GM12878 (cell line): ENCODE measurements at regions of chr14 and their contacts with region 1.

Region 1: GRCh38 chr14:92259613-92260357 is 63.2 kb upstream of the SLC24A4 start:
- DNase-seq: peak; percentile 95
- ATAC-seq: peak; percentile 87
- H3K4me3 ChIP-seq: peak overlapping the region; percentile 20; the same call in 1 of the 2 replicates
- H3K27ac ChIP-seq: peak overlapping the region; percentile 87
- H3K4me1 ChIP-seq: peaks cover 34% of the 10 kb centered on the region
- H3K27me3 ChIP-seq: no peaks in the 10 kb centered on the region; a peak in 1 of 4 replicates
- CTCF ChIP-seq: peak in 1 of 3 experiments; percentile 13; a peak in 1 of 6 replicates
- EP300 ChIP-seq: peak; percentile 52 to 79; a peak in 3 of 4 replicates
- POLR2A ChIP-seq: 0 out of 2 replicates have a peak, but pooled peaks have one; percentile 22
- RAD21 ChIP-seq: 0 out of 2 replicates have a peak, but pooled peaks have one; percentile 10

Region 2: GRCh38 chr14:92274055-92274454 is 14.3 kb after region 1 on chr14:
- CTCF ChIA-PET with region 1: interaction called, 4 read pairs
- POLR2A ChIA-PET with region 1: interaction called, 27 read pairs
- RAD21 ChIA-PET with region 1: interaction called, 9 read pairs
- SMC1A ChIA-PET with region 1: interaction called, 37 read pairs
- in situ Hi-C with region 1: no loop called
- intact Hi-C with region 1: no loop called
- DNase-seq: no peak
- ATAC-seq: peak; percentile 97
- H3K4me3 ChIP-seq: no peak overlapping the region
- H3K27ac ChIP-seq: no peak overlapping the region
- H3K4me1 ChIP-seq: 0 out of 2 replicates have a peak, but pooled peaks cover 3% of the 10 kb centered on the region
- H3K27me3 ChIP-seq: no peaks in the 10 kb centered on the region
- CTCF ChIP-seq: no peak
- EP300 ChIP-seq: no peak
- POLR2A ChIP-seq: no peak
- RAD21 ChIP-seq: no peak